ENCODE measurements at regions of chr2 and their contacts with region 1.

Region 1: DNA sequence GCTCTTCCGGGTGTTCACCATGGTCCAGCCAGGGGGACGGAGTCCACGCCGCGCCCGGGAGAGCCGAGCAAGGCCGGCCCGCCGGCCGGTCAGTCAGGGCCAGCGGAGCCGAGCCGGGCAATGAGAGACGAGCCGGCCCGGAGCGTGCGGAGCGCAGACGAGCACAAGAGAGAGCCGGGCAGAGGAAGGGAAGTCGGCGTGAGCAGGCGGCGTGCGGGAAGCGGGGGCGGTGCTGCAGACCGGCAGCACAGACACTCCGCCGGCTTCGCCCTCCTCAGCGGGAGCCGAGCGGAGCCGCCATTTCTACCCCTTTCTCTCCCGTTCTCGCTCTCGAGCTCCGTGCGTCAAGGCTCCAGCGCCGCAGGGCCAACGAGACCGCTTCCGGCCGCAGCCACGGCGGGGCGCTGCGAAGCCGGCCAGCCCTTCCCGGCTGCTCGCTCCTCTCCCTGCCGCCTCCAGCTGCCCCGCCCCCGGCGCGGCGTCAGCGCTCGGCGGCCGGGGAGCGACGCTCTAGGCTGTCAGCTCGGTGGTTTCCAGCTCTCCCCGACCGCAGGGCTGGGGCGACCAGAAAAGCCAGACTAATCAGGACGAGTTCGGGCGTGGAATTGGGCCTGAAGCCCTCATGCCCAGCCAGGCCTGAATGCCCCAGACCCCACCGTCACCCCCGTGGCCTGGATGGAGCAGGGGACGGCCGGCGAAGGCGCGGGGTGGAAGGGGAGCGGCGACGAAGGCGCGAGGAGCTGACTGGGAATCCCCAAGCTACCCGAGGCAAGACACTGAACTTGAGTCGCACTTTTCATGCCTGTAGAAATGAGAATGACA is at the start of gene ATAD2B:
- DNase-seq: peak; percentile 93 to 97
- ATAC-seq: peak; percentile 98
- H3K4me3 ChIP-seq: peak within 1 kb of the TSS; percentile 86 to 92
- H3K27ac ChIP-seq: peak within 1 kb of the TSS; percentile 91 to 97
- H3K4me1 ChIP-seq: no peaks in the 10 kb centered on the region
- H3K27me3 ChIP-seq: no peaks in the 10 kb centered on the region
- total RNA-seq, gene ATAD2B: 33.4 to 45.8 TPM

Region 2: GRCh38 chr2:24075915-24076848 is 149.2 kb after region 1 on chr2 and contains the start of gene SF3B6:
- intact Hi-C with region 1: loop called (anchors 5 kb)
- DNase-seq: peak; percentile 99
- ATAC-seq: peak; percentile 97
- H3K4me3 ChIP-seq: peak within 1 kb of the TSS; percentile 65 to 94
- H3K27ac ChIP-seq: peak within 1 kb of the TSS; percentile 20 to 90
- H3K4me1 ChIP-seq: no peaks in the 10 kb centered on the region
- H3K27me3 ChIP-seq: no peaks in the 10 kb centered on the region
- total RNA-seq, gene SF3B6: 54.4 to 60.5 TPM

Region 3: GRCh38 chr2:24084386-24085361 is 157.7 kb after region 1 on chr2 and contains the start of gene TP53I3:
- intact Hi-C with region 1: loop called (anchors 5 kb)
- DNase-seq: peak; percentile 92 to 96
- ATAC-seq: peak; percentile 98
- H3K4me3 ChIP-seq: peak within 1 kb of the TSS; percentile 29 to 42
- H3K27ac ChIP-seq: peak within 1 kb of the TSS; percentile 46 to 47
- H3K4me1 ChIP-seq: no peaks in the 10 kb centered on the region
- H3K27me3 ChIP-seq: no peaks in the 10 kb centered on the region
- total RNA-seq, gene TP53I3: 7.3 to 21.0 TPM